OCI-LY7 (cell line): ENCODE measurements at regions of chr6 and their contacts with region 1.

Region 1: DNA sequence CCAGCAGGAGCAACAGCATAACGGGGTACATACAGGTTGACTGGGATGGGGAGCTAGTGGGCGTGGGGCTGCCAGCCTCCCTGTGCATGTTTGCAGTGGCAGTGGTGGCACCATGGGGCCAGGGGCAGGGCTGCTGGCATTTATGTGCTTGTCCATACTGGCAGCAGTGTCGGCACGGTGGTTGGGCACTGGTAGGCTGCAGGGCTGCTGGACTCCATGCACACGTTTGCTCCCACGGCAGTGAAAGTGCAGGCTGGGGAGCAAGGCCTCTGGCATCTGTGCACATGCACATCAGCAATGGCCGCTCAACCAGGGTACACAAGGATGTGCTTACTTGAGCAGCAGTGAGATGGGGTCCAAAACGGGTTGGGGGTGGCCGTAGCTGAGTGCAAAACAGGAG is 159.5 kb upstream of the KHDRBS2 start:
- DNase-seq: no peak
- H3K4me3 ChIP-seq: no peak overlapping the region
- H3K27ac ChIP-seq: no peak overlapping the region
- H3K4me1 ChIP-seq: peaks cover 11% of the 10 kb centered on the region
- CTCF ChIP-seq: no peak

Region 2: DNA sequence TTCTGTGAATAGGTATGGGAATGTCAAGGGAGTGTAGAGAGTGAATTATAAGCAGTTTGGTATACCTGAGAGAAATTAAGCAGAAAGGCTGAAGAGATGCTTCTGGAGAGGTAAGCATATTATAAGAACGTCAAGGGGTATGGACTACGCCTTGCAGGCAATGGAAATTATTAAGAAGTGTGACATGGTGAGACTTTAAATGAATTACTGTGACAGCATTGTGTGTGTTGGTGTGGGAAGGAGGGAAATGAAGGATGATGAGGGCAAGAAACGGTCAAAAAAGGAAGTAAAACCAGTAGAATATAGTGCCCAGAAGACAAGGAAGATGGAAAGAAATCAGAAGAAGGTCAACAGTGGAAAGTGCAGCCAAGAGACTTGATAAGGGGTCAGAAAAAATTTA is 165.4 kb before region 1 on chr6:
- CTCF ChIA-PET with region 1: no interaction called
- POLR2A ChIA-PET with region 1: no interaction called
- intact Hi-C with region 1: loop called (anchors 2 kb)
- DNase-seq: no peak
- H3K4me3 ChIP-seq: no peak overlapping the region
- H3K27ac ChIP-seq: no peak overlapping the region
- H3K4me1 ChIP-seq: peaks cover 6% of the 10 kb centered on the region
- CTCF ChIP-seq: no peak